HEK293 (cell line): ENCODE measurements at regions of chr17 and their contacts with region 1.

Region 1: DNA sequence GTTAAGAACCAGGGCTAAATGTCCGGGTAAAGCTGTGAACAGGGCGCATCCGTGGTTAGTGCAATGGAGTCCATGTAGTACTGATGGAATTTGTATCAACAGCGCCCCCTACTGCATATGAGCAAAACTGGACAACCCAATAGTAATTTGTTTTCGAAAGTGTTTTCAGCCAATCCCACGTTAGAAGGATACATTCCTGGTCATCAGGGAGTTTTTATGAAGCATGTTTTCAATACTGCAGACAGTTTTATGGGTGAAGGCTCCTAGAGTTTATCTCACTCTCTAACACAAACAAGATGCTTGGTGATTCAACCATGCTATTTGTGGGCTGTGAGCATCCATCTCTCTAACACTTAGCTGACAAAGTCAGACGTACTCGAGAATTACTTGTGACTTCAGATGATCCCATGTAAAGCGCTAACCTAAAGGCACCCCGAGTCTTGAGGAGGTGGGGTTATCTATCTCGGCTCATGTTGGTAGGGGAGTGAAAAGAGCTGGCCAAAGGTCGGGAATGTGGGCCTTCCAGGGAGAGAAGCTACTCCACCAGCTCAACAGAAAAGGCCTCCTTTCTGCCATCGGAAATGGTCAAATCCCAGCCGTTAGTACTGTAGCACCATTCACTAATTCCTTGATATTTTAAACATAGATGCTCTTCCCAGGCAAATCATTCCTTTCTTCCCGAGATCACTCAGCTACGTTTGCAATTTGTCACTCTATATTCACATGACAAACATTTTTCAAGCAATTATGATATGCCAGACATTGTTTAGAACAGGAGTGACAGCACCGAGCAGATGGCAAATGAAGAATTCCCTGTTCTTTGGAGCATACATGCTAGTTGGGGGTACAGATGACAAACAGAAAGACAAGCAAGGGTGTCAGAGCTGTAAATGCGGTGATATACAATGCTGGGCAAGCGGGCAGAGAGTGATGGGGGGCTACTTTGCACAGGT is 46.9 kb upstream of the HNF1B start:
- H3K4me3 ChIP-seq: no peak overlapping the region
- H3K27ac ChIP-seq: no peak overlapping the region
- H3K4me1 ChIP-seq: no peaks in the 10 kb centered on the region
- CTCF ChIP-seq: 0 out of 2 replicates have a peak, but pooled peaks have one; percentile 37

Region 2: DNA sequence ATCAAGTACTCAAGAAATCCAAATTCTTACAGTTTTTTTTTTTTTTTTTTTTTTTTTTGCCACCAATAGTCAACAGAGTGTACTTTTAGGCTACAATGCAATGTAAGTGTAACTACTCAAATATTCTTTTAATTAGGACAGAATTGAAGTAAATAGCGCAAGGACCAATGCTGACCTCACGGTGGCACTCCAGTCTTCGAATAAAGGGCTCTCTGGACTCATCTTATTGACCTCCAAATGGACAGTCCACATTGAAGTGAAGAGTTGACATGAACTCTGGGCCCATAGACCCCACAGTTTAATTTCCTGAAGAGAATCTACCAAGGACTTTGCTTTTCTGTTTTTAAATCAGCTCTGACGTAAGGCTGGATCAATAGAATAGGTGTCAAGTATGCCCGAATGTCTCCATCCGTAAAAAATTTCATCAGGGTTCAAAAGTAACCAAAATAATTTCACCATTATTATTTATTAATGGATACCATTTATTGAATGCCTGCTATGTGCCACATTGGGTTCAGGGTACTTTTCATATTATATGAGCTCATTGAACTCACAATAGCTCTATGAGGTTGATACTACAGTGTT is 141.2 kb before region 1 on chr17:
- CTCF ChIA-PET with region 1: interaction called, 10 read pairs
- POLR2A ChIA-PET with region 1: interaction called, 3 read pairs
- H3K4me3 ChIP-seq: no peak overlapping the region
- H3K27ac ChIP-seq: no peak overlapping the region
- H3K4me1 ChIP-seq: no peaks in the 10 kb centered on the region
- CTCF ChIP-seq: no peak

Region 3: DNA sequence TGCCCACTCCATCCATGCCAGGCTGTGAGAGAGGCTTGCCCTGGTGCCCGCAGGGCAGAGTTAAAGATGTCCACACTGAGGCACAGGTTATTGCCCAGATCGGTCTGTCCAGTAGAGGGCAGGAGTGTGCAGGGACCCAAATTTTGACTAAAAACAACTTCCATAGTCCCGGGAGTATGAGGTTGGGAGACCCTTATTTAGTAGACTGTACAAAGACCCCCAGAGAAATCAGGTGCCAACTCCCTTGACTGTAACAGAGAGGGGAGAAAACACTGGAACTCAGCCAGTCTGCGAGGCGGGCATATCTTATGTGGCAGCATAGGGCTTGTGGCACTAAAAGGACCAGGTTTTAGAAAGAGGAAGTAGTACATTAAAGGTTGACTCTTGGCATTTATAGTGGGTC is 90.2 kb before region 1 on chr17:
- CTCF ChIA-PET with region 1: interaction called, 11 read pairs
- POLR2A ChIA-PET with region 1: no interaction called
- H3K4me3 ChIP-seq: no peak overlapping the region
- H3K27ac ChIP-seq: no peak overlapping the region
- H3K4me1 ChIP-seq: no peaks in the 10 kb centered on the region
- CTCF ChIP-seq: 0 out of 2 replicates have a peak, but pooled peaks have one; percentile 30

Region 4: DNA sequence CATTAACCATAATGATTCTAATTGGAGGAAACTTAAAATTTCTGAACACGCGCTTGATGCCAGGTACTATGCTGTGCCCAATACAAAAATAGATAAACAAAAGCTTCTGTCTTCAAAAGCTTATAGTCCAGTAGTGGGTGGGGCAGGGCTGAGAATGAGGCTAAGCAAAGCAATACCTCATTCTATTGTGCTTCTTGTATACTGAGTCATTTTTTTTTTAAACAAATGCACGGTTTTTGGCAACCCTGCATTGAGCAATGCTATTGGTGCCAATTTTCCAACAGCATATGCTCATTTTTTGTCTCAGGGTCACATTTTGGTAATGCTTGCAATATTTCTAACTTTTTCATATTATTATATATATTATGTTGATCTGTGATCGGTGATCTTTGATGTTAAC is 12.2 kb before region 1 on chr17:
- CTCF ChIA-PET with region 1: interaction called, 14 read pairs
- POLR2A ChIA-PET with region 1: interaction called, 3 read pairs
- H3K4me3 ChIP-seq: no peak overlapping the region
- H3K27ac ChIP-seq: no peak overlapping the region
- H3K4me1 ChIP-seq: no peaks in the 10 kb centered on the region
- CTCF ChIP-seq: no peak

Region 5: GRCh38 chr17:37802061-37802595 is 10.4 kb after region 1 on chr17:
- CTCF ChIA-PET with region 1: interaction called, 18 read pairs
- POLR2A ChIA-PET with region 1: no interaction called
- H3K4me3 ChIP-seq: no peak overlapping the region
- H3K27ac ChIP-seq: no peak overlapping the region
- H3K4me1 ChIP-seq: no peaks in the 10 kb centered on the region
- CTCF ChIP-seq: no peak

Region 6: DNA sequence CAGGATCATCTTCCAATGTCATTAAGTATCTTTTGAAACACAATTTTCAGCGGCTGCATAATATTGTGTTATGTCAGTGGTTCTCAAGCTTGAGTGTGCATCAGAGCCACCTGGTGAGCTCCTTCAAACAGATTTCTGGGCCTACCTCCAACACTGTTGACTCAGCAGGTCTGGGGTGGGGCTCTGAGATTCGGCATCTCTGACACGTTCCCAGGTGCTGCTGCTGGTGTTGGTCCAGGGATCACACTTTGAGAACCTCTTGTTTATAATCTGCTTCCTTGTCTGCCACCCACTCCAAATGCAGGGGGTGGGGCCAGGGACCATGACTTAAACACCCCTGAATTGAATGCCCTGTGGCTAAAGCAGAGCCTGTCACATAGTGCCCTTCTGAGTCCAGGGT is 27.0 kb after region 1 on chr17:
- CTCF ChIA-PET with region 1: interaction called, 17 read pairs
- POLR2A ChIA-PET with region 1: no interaction called
- H3K4me3 ChIP-seq: no peak overlapping the region
- H3K27ac ChIP-seq: no peak overlapping the region
- H3K4me1 ChIP-seq: no peaks in the 10 kb centered on the region
- CTCF ChIP-seq: no peak

Region 7: GRCh38 chr17:37888881-37889280 is 97.2 kb after region 1 on chr17:
- CTCF ChIA-PET with region 1: no interaction called
- POLR2A ChIA-PET with region 1: no interaction called
- H3K4me3 ChIP-seq: no peak overlapping the region
- H3K27ac ChIP-seq: no peak overlapping the region
- H3K4me1 ChIP-seq: no peaks in the 10 kb centered on the region
- CTCF ChIP-seq: no peak